Activated CD4-positive, alpha-beta T cell treated with anti-CD3 and anti-CD28 coated beads for 36 hours (primary cell): ENCODE measurements at regions of chr21 and their contacts with region 1.

Region 1: GRCh38 chr21:39183237-39184007 is at the start of gene PSMG1:
- DNase-seq: peak; percentile 97
- ATAC-seq: peak; percentile 92
- H3K4me3 Mint-ChIP-seq: peak within 1 kb of the TSS; percentile 95
- H3K27ac Mint-ChIP-seq: peak within 1 kb of the TSS; percentile 97
- H3K4me1 Mint-ChIP-seq: peaks cover 63% of the 10 kb centered on the region
- H3K27me3 Mint-ChIP-seq: no peaks in the 10 kb centered on the region
- total RNA-seq, gene PSMG1: 109 to 123 TPM

Region 2: DNA sequence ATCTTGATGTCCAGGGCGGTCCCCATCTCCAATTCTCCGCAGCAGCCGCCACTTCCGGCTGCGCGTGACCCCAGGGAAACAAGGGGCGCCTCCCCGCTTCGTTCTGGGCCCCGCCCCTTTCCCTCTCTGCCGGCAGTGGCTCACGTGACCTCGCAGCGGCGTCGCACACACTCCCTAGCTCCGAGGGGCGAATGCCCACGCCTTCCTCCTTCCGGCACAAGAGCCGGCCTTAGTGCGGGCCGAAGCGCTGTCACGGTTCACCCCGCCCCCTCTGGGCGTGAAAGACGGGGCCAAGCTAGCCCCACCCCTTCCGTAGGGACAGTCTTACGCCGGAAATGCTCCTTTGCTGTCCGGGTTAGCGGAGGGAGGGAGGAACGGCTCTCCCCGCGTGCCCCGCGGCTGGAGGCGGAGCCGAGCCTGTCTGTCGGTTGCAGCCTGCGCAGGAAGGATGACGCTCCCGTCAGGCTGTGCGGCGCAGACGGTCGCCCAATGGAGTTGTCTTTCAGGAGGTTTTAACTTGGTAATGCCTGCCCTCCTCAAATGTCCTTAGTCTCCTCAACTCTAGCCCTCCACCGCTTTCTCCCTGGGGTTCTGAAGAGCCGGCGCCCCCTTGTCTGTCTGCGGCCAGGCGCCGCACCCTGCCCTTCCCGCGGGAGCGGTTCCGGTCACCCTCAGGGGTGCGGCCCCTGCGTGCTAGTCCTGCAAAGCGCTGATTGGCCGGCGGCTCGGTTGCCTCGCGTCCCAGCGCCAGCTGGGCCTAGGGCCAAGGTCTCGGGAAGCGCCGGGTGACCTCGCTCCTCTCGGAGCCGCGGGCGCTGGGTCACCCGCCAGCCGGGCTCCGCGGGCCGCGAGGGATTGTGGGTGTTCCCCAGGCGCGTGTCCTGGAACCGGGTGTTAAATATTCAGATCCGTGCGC is 1915.9 kb before region 1 on chr21 and contains the start of gene VPS26C:
- CTCF ChIA-PET with region 1: no interaction called
- POLR2A ChIA-PET with region 1: no interaction called
- intact Hi-C with region 1: loop called in 1 of 2 experiments (anchors 5 kb)
- DNase-seq: peak; percentile 99
- ATAC-seq: peak; percentile 92
- H3K4me3 Mint-ChIP-seq: peak within 1 kb of the TSS; percentile 84
- H3K27ac Mint-ChIP-seq: peak within 1 kb of the TSS; percentile 99
- H3K4me1 Mint-ChIP-seq: peaks cover 28% of the 10 kb centered on the region
- H3K27me3 Mint-ChIP-seq: no peaks in the 10 kb centered on the region
- total RNA-seq, gene VPS26C: 54.8 to 61.7 TPM

Region 3: GRCh38 chr21:39079617-39080016 is 103.8 kb before region 1 on chr21:
- CTCF ChIA-PET with region 1: no interaction called
- POLR2A ChIA-PET with region 1: no interaction called
- intact Hi-C with region 1: no loop called
- DNase-seq: no peak
- ATAC-seq: no peak
- H3K4me3 Mint-ChIP-seq: no peak overlapping the region
- H3K27ac Mint-ChIP-seq: no peak overlapping the region
- H3K4me1 Mint-ChIP-seq: no peaks in the 10 kb centered on the region
- H3K27me3 Mint-ChIP-seq: peaks cover 2% of the 10 kb centered on the region

Region 4: GRCh38 chr21:39313571-39314142 is 130.2 kb after region 1 on chr21 and contains the start of gene BRWD1:
- CTCF ChIA-PET with region 1: no interaction called
- POLR2A ChIA-PET with region 1: interaction called, 3 read pairs
- intact Hi-C with region 1: loop called (anchors 1 to 2 kb)
- DNase-seq: peak; percentile 85
- ATAC-seq: peak; percentile 42
- H3K4me3 Mint-ChIP-seq: peak within 1 kb of the TSS; percentile 92
- H3K27ac Mint-ChIP-seq: peak within 1 kb of the TSS; percentile 96
- H3K4me1 Mint-ChIP-seq: peaks cover 39% of the 10 kb centered on the region
- H3K27me3 Mint-ChIP-seq: no peaks in the 10 kb centered on the region
- total RNA-seq, gene BRWD1: 19.1 to 24.5 TPM

Region 5: GRCh38 chr21:39349211-39350093 is 166.0 kb after region 1 on chr21:
- CTCF ChIA-PET with region 1: no interaction called
- POLR2A ChIA-PET with region 1: interaction called, 7 read pairs
- intact Hi-C with region 1: loop called (anchors 1 kb)
- DNase-seq: peak; percentile 99
- ATAC-seq: peak; percentile 89
- H3K4me3 Mint-ChIP-seq: peak overlapping the region; percentile 92
- H3K27ac Mint-ChIP-seq: peak overlapping the region; percentile 100
- H3K4me1 Mint-ChIP-seq: peaks cover 33% of the 10 kb centered on the region
- H3K27me3 Mint-ChIP-seq: no peaks in the 10 kb centered on the region

Region 6: DNA sequence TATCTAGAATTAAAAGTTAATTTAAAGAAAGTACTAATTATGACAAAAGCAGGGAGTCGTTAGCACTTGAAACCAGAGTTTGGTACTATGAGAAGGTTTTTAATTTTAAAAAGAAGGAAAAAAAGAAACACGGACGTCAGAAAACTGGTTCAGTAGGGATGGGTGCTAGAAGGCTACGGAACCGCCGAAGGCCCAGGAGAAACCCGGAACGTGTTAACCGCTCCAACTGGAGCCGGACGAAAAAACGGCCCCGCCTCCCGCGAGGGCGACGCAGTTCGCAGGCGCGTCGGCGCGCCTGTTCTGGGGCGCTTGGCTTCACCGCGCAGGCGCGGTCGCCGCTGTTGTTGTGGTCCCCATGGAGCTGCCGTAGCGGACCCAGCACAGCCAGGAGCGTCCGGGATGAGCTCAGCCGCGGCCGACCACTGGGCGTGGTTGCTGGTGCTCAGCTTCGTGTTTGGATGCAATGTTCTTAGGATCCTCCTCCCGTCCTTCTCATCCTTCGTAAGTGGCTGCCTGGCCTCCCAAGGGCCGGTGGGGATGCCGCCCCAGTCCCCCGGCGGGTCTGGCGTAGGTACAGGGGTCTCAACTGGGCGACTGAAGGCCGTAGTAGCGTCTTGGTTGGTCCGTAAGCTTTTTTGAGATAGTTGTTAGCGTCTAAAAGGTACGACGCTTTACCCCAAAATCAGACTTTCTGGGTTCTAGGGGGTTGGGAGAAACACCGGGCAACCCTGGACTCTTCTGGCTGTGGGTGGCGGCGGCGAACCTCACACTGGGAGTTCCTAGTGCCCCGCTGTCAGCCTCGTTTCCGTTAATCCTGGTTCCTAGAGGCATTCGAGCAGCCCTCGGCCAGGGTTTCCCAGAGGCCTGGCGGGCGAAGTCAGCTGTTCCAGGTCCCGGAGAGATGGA is 196.8 kb after region 1 on chr21:
- CTCF ChIA-PET with region 1: interaction called, 3 read pairs
- POLR2A ChIA-PET with region 1: interaction called, 4 read pairs
- intact Hi-C with region 1: loop called in 1 of 2 experiments (anchors 1 kb)
- DNase-seq: peak; percentile 96
- ATAC-seq: peak; percentile 98
- H3K4me3 Mint-ChIP-seq: peak overlapping the region; percentile 84
- H3K27ac Mint-ChIP-seq: peak overlapping the region; percentile 64
- H3K4me1 Mint-ChIP-seq: peaks cover 23% of the 10 kb centered on the region
- H3K27me3 Mint-ChIP-seq: no peaks in the 10 kb centered on the region

Region 7: DNA sequence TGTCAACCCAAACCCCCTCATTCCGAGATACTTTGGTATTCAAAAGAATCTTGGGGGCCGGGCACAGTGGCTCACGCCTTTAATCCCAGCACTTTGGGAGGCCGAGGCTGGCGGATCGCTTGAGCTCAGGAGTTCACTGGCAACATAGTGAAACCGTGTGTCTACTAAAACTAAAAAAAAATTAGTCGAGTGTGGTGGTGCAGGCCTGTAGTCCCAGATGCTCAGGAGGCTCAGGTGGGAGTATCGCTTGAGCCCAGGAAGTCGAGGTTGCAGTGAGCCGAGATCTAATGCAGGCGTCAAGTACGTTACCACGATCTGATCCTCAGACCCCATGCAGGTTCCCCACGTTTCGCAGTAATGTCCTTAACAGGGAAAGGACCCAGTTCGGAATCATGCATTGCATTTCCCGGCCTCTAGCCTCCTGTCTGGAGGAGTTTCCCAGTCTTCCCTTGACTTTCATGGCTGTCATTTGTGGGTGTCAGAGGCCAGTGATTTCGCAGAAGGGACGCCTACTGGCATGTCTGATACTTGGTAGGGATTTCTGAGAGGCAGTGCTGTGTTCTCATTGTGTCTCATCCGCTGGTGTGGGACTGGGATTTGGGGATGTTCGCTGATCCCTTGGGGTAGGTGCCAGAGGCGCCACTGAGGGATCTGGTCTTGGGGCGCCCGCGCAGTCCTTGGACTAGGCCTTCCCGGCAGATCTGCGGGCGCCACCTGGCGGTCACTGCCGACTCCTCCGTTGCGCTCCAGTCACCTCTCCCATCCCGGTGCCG is 204.8 kb after region 1 on chr21:
- CTCF ChIA-PET with region 1: no interaction called
- POLR2A ChIA-PET with region 1: interaction called, 5 read pairs
- intact Hi-C with region 1: loop called (anchors 1 kb)
- DNase-seq: peak; percentile 95
- ATAC-seq: peak; percentile 83
- H3K4me3 Mint-ChIP-seq: peak overlapping the region; percentile 73
- H3K27ac Mint-ChIP-seq: peak overlapping the region; percentile 89
- H3K4me1 Mint-ChIP-seq: peaks cover 25% of the 10 kb centered on the region
- H3K27me3 Mint-ChIP-seq: no peaks in the 10 kb centered on the region

Region 8: GRCh38 chr21:39754811-39755210 is 571.4 kb after region 1 on chr21:
- CTCF ChIA-PET with region 1: no interaction called
- POLR2A ChIA-PET with region 1: no interaction called
- intact Hi-C with region 1: no loop called
- DNase-seq: no peak
- ATAC-seq: no peak
- H3K4me3 Mint-ChIP-seq: no peak overlapping the region
- H3K27ac Mint-ChIP-seq: no peak overlapping the region
- H3K4me1 Mint-ChIP-seq: no peaks in the 10 kb centered on the region
- H3K27me3 Mint-ChIP-seq: no peaks in the 10 kb centered on the region